ENCODE measurements at regions of chr10 and their contacts with region 1.

Region 1: GRCh38 chr10:5548527-5549223 is 23.9 kb downstream of the CALML3 start:
- DNase-seq: peak; percentile 78
- H3K4me3 Mint-ChIP-seq: no peak overlapping the region
- H3K27ac Mint-ChIP-seq: no peak overlapping the region
- H3K4me1 Mint-ChIP-seq: peaks cover 27% of the 10 kb centered on the region
- H3K27me3 Mint-ChIP-seq: no peaks in the 10 kb centered on the region

Region 2: DNA sequence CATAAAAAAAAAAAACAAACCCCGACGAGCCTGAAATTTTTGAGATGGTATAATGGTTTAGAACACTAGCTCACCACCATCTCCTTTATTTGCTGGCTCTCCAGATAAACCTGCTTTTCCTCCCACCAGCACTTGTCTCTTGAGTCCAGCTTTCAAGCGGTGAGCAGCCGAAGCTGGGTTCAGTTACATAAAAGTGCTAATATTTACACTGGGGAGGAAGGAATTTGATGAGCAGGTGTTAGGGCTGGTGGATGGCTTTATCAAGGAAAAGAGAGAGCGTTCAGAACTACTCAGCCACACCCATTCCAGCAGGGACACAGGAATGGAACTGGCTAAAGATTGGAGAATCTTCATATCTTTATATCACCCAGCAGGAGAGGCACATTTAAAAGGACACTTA is 30.5 kb before region 1 on chr10:
- CTCF ChIA-PET with region 1: no interaction called
- POLR2A ChIA-PET with region 1: no interaction called
- intact Hi-C with region 1: loop called (anchors 5 kb)
- DNase-seq: no peak
- H3K4me3 Mint-ChIP-seq: no peak overlapping the region
- H3K27ac Mint-ChIP-seq: no peak overlapping the region
- H3K4me1 Mint-ChIP-seq: peaks cover 5% of the 10 kb centered on the region
- H3K27me3 Mint-ChIP-seq: peaks cover 3% of the 10 kb centered on the region

Region 3: GRCh38 chr10:5563991-5564536 is 15.4 kb after region 1 on chr10:
- CTCF ChIA-PET with region 1: no interaction called
- POLR2A ChIA-PET with region 1: interaction called, 3 read pairs
- intact Hi-C with region 1: loop called (anchors 1 kb)
- DNase-seq: peak; percentile 78
- H3K4me3 Mint-ChIP-seq: peak overlapping the region; percentile 45
- H3K27ac Mint-ChIP-seq: peak overlapping the region; percentile 77
- H3K4me1 Mint-ChIP-seq: peaks cover 39% of the 10 kb centered on the region
- H3K27me3 Mint-ChIP-seq: peaks cover 3% of the 10 kb centered on the region